ENCODE measurements at regions of chr11 and their contacts with region 1.

Region 1: DNA sequence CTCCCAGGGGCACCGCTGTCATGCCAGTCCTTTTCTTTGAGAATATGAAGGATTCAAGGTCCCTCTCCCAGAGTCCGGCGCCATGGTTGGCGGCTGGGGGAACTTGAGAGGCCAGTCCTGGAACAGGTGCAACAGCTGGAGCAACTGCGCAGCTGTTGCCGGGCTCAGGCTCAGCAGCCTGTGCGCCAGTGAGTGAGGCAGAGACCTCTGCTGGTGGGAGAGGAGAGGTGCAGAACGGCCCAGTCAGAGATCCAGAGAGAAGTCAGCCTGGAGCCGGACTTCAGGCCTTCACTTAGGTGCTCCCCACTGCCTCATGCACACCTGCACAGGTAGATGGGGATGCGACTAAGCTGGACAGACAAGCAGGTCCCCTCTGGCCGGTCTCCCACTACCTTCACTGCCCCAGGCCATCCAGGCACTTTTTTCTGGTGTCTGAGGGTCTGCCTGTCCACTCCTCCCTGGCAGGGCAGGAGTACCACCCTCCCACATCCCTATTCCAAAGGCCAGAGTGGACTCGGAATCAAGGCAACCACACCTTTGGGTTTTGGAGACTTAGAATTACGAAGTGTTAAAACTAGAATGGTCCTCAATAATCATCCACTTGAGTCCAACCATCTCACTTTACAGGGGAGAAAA is 4.6 kb downstream of the CHRDL2 start:
- DNase-seq: peak; percentile 62

Region 2: DNA sequence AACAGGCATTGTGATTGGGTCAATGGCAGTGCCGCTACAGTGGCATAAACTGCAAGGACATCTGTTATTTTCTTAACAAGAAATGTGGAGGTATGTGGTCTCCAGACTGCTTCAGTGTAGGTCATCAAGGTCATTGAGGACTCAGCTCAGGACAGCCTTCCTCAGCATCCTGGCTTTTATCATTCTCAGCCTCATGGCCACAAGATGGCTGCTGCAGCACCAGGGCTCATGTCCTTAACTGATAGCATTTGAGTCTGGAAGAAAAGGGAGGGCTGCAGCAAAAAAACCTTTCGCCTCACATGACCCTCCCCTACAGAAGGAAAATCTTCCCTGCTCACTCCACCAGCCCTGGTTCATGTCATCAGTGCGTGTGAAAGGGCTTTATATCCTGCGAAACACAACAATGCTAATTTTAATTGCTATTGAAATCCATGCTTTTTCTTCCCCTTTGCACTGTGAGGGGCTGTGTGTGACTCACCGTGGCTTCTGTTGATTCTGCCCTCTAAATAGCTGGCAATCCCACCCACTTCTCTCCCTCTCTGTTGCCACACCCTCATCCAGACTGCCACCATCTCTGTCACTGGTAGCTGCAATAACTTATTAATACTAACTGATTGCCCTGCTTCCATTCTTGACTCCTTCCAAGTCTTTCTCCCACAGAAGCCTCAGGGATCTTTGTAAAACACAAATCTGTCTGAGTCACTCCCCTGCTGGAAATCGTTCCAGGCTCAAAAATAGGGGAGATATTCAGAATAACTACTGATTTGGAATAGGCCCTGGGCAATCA is 39.2 kb before region 1 on chr11:
- in situ Hi-C with region 1: loop called (anchors 5 kb)
- DNase-seq: no peak